MCF 10A (cell line): ENCODE measurements at regions of chr15 and their contacts with region 1.

Region 1: DNA sequence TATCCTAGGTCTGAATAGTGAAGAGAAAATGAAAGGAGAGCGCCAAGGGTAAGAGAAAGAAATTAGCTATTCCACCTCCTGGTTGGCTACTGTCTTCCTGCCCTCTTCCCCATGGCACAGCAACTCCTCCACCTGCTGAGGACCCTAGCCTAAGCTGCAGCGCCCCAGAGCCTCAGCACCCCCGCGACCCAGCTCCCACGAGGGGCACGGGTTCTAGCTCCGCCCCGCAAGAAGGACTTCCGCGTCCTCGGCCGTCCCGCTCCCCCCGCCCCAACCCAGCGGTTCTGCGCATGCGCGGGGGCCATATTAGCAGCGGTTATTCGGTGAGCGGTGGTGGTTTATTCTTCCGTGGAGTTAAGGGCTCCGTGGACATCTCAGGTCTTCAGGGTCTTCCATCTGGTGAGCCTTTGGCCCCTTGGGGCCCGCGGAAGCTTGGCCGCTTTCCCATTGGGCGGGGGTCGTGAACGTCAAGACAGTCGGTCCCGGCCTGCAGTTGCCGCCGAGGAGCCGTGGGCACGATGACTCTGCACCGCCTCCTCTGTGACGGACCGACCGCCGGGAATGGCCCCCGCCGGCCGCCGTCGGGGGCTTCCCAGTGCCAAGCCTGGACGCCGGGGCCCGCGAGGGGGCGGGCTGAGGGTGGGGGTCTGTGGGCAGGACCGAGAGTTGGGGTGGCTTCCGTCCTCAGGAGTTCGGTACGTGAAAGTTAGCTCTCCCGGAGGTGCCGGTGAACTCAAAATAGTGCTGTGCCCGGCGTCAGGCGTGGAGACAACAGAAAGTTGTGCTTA is at the start of gene PSMA4:
- DNase-seq: peak; percentile 88
- H3K4me3 Mint-ChIP-seq: peak within 1 kb of the TSS; percentile 92
- H3K27ac Mint-ChIP-seq: peak within 1 kb of the TSS; percentile 97
- H3K4me1 Mint-ChIP-seq: peaks cover 14% of the 10 kb centered on the region
- H3K27me3 Mint-ChIP-seq: no peaks in the 10 kb centered on the region
- CTCF ChIP-seq: no peak
- total RNA-seq, gene PSMA4: 221 and 261 TPM in 2 replicates

Region 2: GRCh38 chr15:78506971-78507830 is 33.1 kb before region 1 on chr15 and contains the start of gene HYKK:
- CTCF ChIA-PET with region 1: interaction called, 5 read pairs
- POLR2A ChIA-PET with region 1: interaction called, 39 read pairs
- intact Hi-C with region 1: no loop called
- DNase-seq: peak; percentile 99
- H3K4me3 Mint-ChIP-seq: peak within 1 kb of the TSS; percentile 85
- H3K27ac Mint-ChIP-seq: peak within 1 kb of the TSS; percentile 76
- H3K4me1 Mint-ChIP-seq: peaks cover 7% of the 10 kb centered on the region
- H3K27me3 Mint-ChIP-seq: no peaks in the 10 kb centered on the region
- CTCF ChIP-seq: no peak
- total RNA-seq, gene HYKK: 1.2 and 1.3 TPM in 2 replicates